GM12878 (cell line): ENCODE measurements at regions of chr5 and their contacts with region 1.

Region 1: GRCh38 chr5:111158105-111158744 is 66.0 kb upstream of the CAMK4 start:
- DNase-seq: peak; percentile 64
- ATAC-seq: peak; percentile 93
- H3K4me3 ChIP-seq: no peak overlapping the region
- H3K27ac ChIP-seq: no peak overlapping the region
- H3K4me1 ChIP-seq: no peaks in the 10 kb centered on the region
- H3K27me3 ChIP-seq: no peaks in the 10 kb centered on the region
- CTCF ChIP-seq: peak; percentile 99 to 100 (median 100); a peak in 5 of 6 replicates
- EP300 ChIP-seq: no peak
- POLR2A ChIP-seq: no peak
- RAD21 ChIP-seq: peak; percentile 99

Region 2: DNA sequence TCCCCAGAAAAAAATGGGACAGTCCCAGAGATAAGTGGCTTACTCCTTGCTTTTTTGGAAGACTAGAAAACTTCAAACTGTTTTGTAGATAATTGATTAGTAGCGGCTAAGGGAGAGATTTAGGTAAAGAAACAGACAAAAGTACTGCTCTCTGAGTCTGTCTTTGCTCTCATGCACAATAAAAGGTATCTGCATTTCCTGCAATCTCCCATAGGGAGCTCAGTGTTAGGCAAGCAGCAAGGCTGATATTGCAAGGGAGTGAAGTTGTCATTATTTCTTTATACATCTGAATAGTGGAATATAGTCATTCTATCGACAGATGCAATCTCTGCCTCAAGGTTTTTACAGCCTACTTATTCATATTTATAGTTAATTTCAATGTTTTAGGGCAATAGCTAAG is 11.0 kb after region 1 on chr5:
- CTCF ChIA-PET with region 1: interaction called, 4 read pairs
- POLR2A ChIA-PET with region 1: no interaction called
- RAD21 ChIA-PET with region 1: interaction called, 3 read pairs
- SMC1A ChIA-PET with region 1: interaction called, 28 read pairs
- in situ Hi-C with region 1: no loop called
- intact Hi-C with region 1: no loop called
- DNase-seq: no peak
- ATAC-seq: no peak
- H3K4me3 ChIP-seq: no peak overlapping the region
- H3K27ac ChIP-seq: no peak overlapping the region
- H3K4me1 ChIP-seq: no peaks in the 10 kb centered on the region
- H3K27me3 ChIP-seq: no peaks in the 10 kb centered on the region
- CTCF ChIP-seq: no peak
- EP300 ChIP-seq: no peak
- POLR2A ChIP-seq: no peak
- RAD21 ChIP-seq: no peak

Region 3: GRCh38 chr5:111223889-111224563 is 65.8 kb after region 1 on chr5 and contains the start of gene CAMK4:
- CTCF ChIA-PET with region 1: interaction called, 19 read pairs
- POLR2A ChIA-PET with region 1: no interaction called
- RAD21 ChIA-PET with region 1: interaction called, 45 read pairs
- SMC1A ChIA-PET with region 1: interaction called, 54 read pairs
- in situ Hi-C with region 1: no loop called
- intact Hi-C with region 1: loop called (anchors 2 kb)
- DNase-seq: no peak
- ATAC-seq: peak; percentile 79
- H3K4me3 ChIP-seq: peak within 1 kb of the TSS; percentile 83
- H3K27ac ChIP-seq: peak within 1 kb of the TSS; percentile 85
- H3K4me1 ChIP-seq: peaks cover 12% of the 10 kb centered on the region
- H3K27me3 ChIP-seq: no peaks in the 10 kb centered on the region
- CTCF ChIP-seq: peak; percentile 12 to 35 (median 32); a peak in 2 of 6 replicates
- EP300 ChIP-seq: no peak
- POLR2A ChIP-seq: peak; percentile 67
- RAD21 ChIP-seq: peak; percentile 36
- polyA plus RNA-seq, gene CAMK4: 13.3 to 15.0 TPM

Region 4: GRCh38 chr5:111337688-111338087 is 179.5 kb after region 1 on chr5:
- CTCF ChIA-PET with region 1: interaction called, 10 read pairs
- POLR2A ChIA-PET with region 1: no interaction called
- RAD21 ChIA-PET with region 1: interaction called, 4 read pairs
- SMC1A ChIA-PET with region 1: interaction called, 5 read pairs
- in situ Hi-C with region 1: no loop called
- intact Hi-C with region 1: no loop called
- DNase-seq: peak; percentile 31
- ATAC-seq: peak; percentile 90
- H3K4me3 ChIP-seq: no peak overlapping the region
- H3K27ac ChIP-seq: peak overlapping the region; percentile 22; the same call in 1 of the 2 replicates
- H3K4me1 ChIP-seq: peaks cover 8% of the 10 kb centered on the region
- H3K27me3 ChIP-seq: no peaks in the 10 kb centered on the region
- CTCF ChIP-seq: no peak
- EP300 ChIP-seq: peak; percentile 25 to 61; a peak in 3 of 4 replicates
- POLR2A ChIP-seq: no peak
- RAD21 ChIP-seq: no peak

Region 5: DNA sequence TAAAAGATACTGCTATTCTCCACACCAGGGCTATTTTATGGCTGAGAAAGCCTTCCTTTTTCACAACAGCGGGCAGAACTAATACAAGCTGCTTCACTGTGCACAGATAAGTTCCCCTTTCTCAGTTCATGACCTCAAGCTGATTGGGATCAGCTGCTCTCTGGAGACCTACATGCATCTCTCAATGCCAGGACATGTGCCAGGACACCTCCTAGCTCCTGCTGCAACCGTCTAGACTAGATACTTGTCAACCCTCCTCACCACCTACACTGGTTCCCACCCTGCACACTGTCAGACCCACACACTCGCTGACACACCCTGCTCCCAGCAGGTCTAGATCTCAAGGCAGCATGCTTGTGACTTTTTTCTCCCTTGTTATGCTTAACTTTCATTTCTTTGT is 314.4 kb after region 1 on chr5:
- CTCF ChIA-PET with region 1: interaction called, 4 read pairs
- POLR2A ChIA-PET with region 1: no interaction called
- RAD21 ChIA-PET with region 1: interaction called, 7 read pairs
- SMC1A ChIA-PET with region 1: interaction called, 9 read pairs
- in situ Hi-C with region 1: loop called (anchors 10 kb)
- intact Hi-C with region 1: no loop called
- DNase-seq: no peak
- ATAC-seq: peak; percentile 55
- H3K4me3 ChIP-seq: no peak overlapping the region
- H3K27ac ChIP-seq: no peak overlapping the region
- H3K4me1 ChIP-seq: peaks cover 3% of the 10 kb centered on the region; the same call in 1 of the 2 replicates
- H3K27me3 ChIP-seq: no peaks in the 10 kb centered on the region
- CTCF ChIP-seq: no peak
- EP300 ChIP-seq: no peak
- POLR2A ChIP-seq: no peak
- RAD21 ChIP-seq: no peak

Region 6: DNA sequence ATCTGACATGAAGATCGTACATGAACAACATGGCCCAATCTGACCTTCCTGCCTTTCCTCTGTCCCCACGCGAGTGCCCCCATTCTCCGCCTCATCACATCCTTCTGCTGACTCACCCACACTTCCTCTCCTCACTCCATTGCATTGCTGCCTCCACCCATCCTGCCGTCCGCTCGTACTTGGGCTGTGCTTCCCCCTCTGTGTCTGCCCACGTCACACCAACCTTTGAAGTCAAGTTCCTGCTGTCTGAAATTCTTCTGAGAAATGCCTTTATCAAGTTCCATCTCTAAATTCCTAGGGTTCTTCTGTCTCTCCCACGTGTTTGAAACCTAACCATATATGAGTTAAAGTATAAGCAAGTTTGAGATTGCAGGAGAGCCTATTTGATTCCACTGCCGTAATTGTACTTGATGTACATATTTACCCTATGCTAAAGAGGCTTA is 372.1 kb after region 1 on chr5:
- CTCF ChIA-PET with region 1: interaction called, 26 read pairs
- POLR2A ChIA-PET with region 1: no interaction called
- RAD21 ChIA-PET with region 1: interaction called, 5 read pairs
- SMC1A ChIA-PET with region 1: interaction called, 3 read pairs
- in situ Hi-C with region 1: no loop called
- intact Hi-C with region 1: no loop called
- DNase-seq: peak; percentile 57
- ATAC-seq: peak; percentile 98
- H3K4me3 ChIP-seq: no peak overlapping the region
- H3K27ac ChIP-seq: peak overlapping the region; percentile 37; the same call in 1 of the 2 replicates
- H3K4me1 ChIP-seq: peaks cover 4% of the 10 kb centered on the region
- H3K27me3 ChIP-seq: no peaks in the 10 kb centered on the region
- CTCF ChIP-seq: no peak
- EP300 ChIP-seq: no peak
- POLR2A ChIP-seq: peak; percentile 39; the same call in 1 of the 2 replicates
- RAD21 ChIP-seq: no peak